Gastrocnemius medialis (tissue), 4 donors: ENCODE measurements at regions of chr9 and their contacts with region 1.

Region 1: DNA sequence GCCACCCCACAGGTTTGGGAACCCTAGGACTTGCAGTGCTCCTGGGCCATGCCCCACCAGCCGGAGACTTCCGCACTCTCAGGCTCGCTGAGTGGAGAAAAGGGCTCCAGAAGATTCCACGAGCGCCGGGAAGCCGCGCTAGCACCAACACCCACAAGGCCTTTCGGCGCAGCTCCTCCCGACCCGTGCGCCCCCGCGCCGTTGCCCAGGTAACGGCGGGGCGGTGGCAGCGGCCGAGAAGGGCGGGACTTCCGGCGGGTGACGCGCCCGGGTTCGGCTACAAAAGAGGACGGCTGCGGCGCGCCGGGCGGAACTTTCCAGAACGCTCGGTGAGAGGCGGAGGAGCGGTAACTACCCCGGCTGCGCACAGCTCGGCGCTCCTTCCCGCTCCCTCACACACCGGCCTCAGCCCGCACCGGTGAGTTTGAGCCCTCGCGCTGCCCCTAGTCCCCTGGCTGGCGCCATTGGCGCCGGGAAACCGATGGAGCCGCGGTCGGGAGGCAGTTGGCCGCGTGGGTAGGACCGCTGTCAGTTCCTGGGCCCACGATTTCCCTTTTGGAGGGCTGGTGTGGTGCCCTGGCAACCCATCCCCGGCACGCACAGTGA is at the start of gene DNAJA1:
- DNase-seq: peak; percentile 88 to 91
- ATAC-seq: peak; percentile 93 to 94
- H3K4me3 ChIP-seq: peak within 1 kb of the TSS; percentile 93 to 99 (median 98)
- H3K27ac ChIP-seq: peak within 1 kb of the TSS; percentile 97 to 99 (median 99)
- H3K4me1 ChIP-seq: peaks cover 43 to 45% of the 10 kb centered on the region in 2 donors
- H3K27me3 ChIP-seq: no peaks in the 10 kb centered on the region
- CTCF ChIP-seq: peak in 1 of 5 experiments; percentile 9
- POLR2A ChIP-seq: peak; percentile 97 to 100
- total RNA-seq, gene DNAJA1: 40.8 to 48.7 (median 43.3) TPM

Region 2: DNA sequence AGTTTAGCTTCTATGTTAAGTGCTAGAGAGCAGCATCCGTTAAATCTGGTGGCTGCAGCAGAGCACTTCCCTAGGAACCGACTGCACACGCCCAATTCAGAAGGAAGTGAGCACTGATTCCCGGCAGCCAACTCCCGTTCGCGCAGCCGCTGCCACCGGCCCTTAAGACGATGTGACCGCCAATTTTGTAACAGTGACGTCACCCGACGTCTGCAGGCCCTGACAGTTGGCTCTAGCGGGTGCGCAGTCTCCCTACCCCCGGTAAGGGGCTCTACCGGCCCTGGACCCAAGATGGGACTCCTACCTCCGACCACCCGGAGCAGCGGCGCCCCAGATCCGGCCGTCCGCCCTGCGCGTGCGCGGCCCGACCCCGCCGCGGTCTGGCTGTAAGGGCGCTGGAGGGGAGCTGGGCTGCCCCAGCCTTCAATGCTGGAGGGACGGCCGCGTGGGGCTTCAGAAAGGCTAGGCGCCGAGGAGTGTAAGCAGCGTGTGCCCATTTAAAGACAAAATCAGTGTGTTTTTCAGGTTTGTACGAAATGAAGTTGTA is 19.1 kb after region 1 on chr9:
- in situ Hi-C with region 1: no loop called
- intact Hi-C with region 1: loop called (anchors 2 kb)
- DNase-seq: peak; percentile 56 to 81
- ATAC-seq: peak; percentile 87 to 94
- H3K4me3 ChIP-seq: peak overlapping the region; percentile 62 to 78 (median 73)
- H3K27ac ChIP-seq: peak overlapping the region; percentile 82 to 93 (median 92)
- H3K4me1 ChIP-seq: peaks cover 6 to 9% of the 10 kb centered on the region in 2 donors
- H3K27me3 ChIP-seq: no peaks in the 10 kb centered on the region
- CTCF ChIP-seq: no peak
- POLR2A ChIP-seq: peak; percentile 37

Region 3: GRCh38 chr9:33092634-33093033 is 67.6 kb after region 1 on chr9:
- in situ Hi-C with region 1: no loop called
- intact Hi-C with region 1: no loop called
- DNase-seq: no peak
- ATAC-seq: no peak
- H3K4me3 ChIP-seq: no peak overlapping the region
- H3K27ac ChIP-seq: no peak overlapping the region
- H3K4me1 ChIP-seq: no peaks in the 10 kb centered on the region
- H3K27me3 ChIP-seq: no peaks in the 10 kb centered on the region
- CTCF ChIP-seq: no peak
- POLR2A ChIP-seq: no peak